MCF 10A (cell line): ENCODE measurements at regions of chr1 and their contacts with region 1.

Region 1: DNA sequence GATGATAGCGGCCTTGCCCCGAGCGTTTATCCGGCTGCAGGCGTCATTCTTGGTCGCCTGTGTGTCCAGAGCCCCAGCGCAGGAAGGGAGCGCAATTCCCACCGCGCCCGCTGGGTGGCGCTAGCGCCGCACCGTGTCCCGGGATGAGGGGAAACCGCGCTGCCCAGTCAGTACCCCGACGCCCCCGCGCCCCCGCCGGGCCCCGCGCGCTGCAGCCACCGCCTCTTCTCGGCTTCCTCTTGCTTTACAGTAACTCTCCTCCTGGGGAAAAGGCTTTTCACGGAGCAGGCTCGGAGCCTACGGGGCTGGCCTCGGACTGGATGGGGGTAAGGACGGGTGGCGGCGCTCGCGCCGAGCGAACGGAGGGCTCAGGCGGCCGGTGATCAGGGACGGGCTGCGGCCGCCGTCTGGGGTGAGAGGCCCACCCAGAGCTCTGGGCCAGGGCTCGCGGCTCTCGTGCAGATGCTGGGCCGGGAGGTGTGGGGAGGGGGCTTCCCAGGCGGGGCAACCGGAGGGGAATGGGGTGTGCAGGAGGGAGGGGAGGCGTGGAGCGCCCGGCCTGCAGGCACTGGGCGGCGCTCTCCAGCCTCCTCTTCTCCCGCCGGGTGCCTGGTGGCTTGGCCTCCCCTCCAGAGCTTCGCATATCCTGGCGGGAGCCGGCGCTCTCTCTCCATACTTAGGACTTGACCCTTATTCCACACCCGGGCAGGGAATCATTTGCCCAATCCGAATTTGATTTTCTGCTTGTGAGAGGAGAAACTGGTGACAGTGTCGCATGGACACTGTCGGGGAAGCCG is 29.8 kb downstream of the TEX35 start:
- DNase-seq: peak; percentile 89
- H3K4me3 Mint-ChIP-seq: peak overlapping the region; percentile 95
- H3K27ac Mint-ChIP-seq: peak overlapping the region; percentile 80
- H3K4me1 Mint-ChIP-seq: peaks cover 35% of the 10 kb centered on the region
- H3K27me3 Mint-ChIP-seq: no peaks in the 10 kb centered on the region
- CTCF ChIP-seq: peak; percentile 100

Region 2: DNA sequence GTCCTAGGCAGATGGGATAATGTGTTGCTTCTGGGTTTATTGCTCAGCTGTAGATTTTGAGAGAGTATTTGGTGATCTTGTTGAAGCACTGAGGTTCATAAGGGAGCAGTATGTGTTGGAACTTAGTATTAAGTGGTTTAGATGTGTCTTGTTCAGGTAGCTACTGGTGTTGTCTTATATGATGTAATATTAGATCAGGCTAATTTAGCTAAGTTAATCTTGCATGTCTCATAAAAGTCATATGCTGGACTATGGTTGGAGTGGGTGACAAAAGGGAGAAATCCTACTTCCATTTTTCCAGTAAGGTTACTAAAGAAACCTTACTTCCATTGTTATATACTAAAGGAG is 242.4 kb before region 1 on chr1:
- CTCF ChIA-PET with region 1: interaction called, 35 read pairs
- POLR2A ChIA-PET with region 1: interaction called, 7 read pairs
- intact Hi-C with region 1: no loop called
- DNase-seq: no peak
- H3K4me3 Mint-ChIP-seq: no peak overlapping the region
- H3K27ac Mint-ChIP-seq: peak overlapping the region; percentile 50
- H3K4me1 Mint-ChIP-seq: peaks cover 15% of the 10 kb centered on the region
- H3K27me3 Mint-ChIP-seq: no peaks in the 10 kb centered on the region
- CTCF ChIP-seq: no peak

Region 3: GRCh38 chr1:178465011-178465410 is 77.7 kb before region 1 on chr1:
- CTCF ChIA-PET with region 1: no interaction called
- POLR2A ChIA-PET with region 1: no interaction called
- intact Hi-C with region 1: no loop called
- DNase-seq: peak; percentile 74
- H3K4me3 Mint-ChIP-seq: peak overlapping the region; percentile 2
- H3K27ac Mint-ChIP-seq: peak overlapping the region; percentile 73
- H3K4me1 Mint-ChIP-seq: peaks cover 27% of the 10 kb centered on the region
- H3K27me3 Mint-ChIP-seq: no peaks in the 10 kb centered on the region
- CTCF ChIP-seq: no peak

Region 4: DNA sequence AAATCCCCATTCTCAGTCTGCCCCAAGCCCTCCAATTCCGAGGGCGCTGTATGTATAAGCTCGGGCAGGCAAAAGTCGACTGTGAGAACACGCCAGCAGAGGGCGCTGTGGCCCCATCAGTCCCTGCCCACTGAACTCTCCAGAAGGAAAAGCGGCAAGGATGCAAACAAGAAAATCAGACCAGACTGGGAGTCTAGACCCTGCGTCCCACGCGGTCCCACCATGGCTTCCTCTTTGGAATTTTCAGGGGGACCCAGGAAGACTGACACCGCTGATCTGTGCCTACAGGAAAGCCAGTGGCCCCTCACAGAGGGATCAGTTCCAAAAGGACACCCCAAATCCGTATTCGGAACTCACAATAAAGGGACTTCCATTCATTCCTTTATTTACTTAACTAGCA is 10.4 kb before region 1 on chr1:
- CTCF ChIA-PET with region 1: interaction called, 93 read pairs
- POLR2A ChIA-PET with region 1: interaction called, 3 read pairs
- intact Hi-C with region 1: no loop called
- DNase-seq: peak; percentile 88
- H3K4me3 Mint-ChIP-seq: no peak overlapping the region
- H3K27ac Mint-ChIP-seq: no peak overlapping the region
- H3K4me1 Mint-ChIP-seq: peaks cover 36% of the 10 kb centered on the region
- H3K27me3 Mint-ChIP-seq: peaks cover 7% of the 10 kb centered on the region
- CTCF ChIP-seq: peak; percentile 99

Region 5: GRCh38 chr1:178566187-178566586 is 23.4 kb after region 1 on chr1:
- CTCF ChIA-PET with region 1: interaction called, 19 read pairs
- POLR2A ChIA-PET with region 1: no interaction called
- intact Hi-C with region 1: no loop called
- DNase-seq: peak; percentile 21
- H3K4me3 Mint-ChIP-seq: no peak overlapping the region
- H3K27ac Mint-ChIP-seq: no peak overlapping the region
- H3K4me1 Mint-ChIP-seq: no peaks in the 10 kb centered on the region
- H3K27me3 Mint-ChIP-seq: no peaks in the 10 kb centered on the region
- CTCF ChIP-seq: no peak

Region 6: GRCh38 chr1:178629252-178630154 is 86.7 kb after region 1 on chr1:
- CTCF ChIA-PET with region 1: interaction called, 15 read pairs
- POLR2A ChIA-PET with region 1: no interaction called
- intact Hi-C with region 1: no loop called
- DNase-seq: no peak
- H3K4me3 Mint-ChIP-seq: no peak overlapping the region
- H3K27ac Mint-ChIP-seq: no peak overlapping the region
- H3K4me1 Mint-ChIP-seq: peaks cover 33% of the 10 kb centered on the region
- H3K27me3 Mint-ChIP-seq: no peaks in the 10 kb centered on the region
- CTCF ChIP-seq: no peak

Region 7: GRCh38 chr1:178739285-178740045 is 196.7 kb after region 1 on chr1:
- CTCF ChIA-PET with region 1: interaction called, 13 read pairs
- POLR2A ChIA-PET with region 1: interaction called, 3 read pairs
- intact Hi-C with region 1: no loop called
- DNase-seq: peak; percentile 67
- H3K4me3 Mint-ChIP-seq: no peak overlapping the region
- H3K27ac Mint-ChIP-seq: peak overlapping the region; percentile 32
- H3K4me1 Mint-ChIP-seq: peaks cover 11% of the 10 kb centered on the region
- H3K27me3 Mint-ChIP-seq: no peaks in the 10 kb centered on the region
- CTCF ChIP-seq: no peak

Region 8: DNA sequence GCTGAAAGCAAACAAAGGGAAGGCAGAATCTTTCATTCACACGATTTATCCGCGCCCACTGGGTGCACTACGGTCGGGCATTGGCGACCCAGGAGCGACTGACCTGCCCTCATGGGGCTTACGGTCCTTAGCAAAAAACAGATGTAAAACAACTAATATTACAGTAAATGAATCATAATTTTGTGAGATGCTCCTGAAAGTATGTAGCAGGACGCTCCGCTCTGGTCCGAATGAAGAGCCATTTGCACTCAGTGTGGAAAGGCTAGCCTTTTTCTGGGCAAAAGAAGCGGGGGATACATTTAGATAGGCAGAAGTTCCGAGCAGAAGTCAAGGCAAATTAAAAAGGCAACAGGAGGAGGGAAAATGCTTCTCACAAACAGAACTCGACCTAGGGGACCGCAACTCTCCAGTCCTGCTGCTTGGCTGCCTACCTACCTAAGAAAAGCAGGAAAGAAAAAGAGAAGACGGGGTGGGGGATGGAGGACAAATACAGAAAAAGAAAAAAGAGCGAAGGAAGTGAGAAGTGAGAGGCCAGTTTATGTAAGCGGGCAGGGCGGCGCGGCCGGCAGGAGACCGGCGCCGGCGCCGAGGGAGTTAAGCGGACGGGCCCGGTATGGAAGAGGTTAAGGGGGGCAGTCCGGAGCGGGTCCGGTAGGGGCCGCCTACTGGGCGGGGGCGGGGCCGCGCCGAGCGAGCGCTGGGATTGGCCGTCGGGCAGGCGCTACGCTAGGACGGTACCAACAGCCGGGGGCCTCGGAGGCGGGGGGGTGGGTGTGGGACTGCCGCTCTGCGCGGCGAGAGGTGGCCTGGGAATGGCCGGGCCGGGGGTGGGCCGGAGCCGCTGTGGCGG is 482.6 kb after region 1 on chr1 and contains the start of gene FAM20B:
- CTCF ChIA-PET with region 1: interaction called, 11 read pairs
- POLR2A ChIA-PET with region 1: interaction called, 6 read pairs
- intact Hi-C with region 1: no loop called
- DNase-seq: peak; percentile 94
- H3K4me3 Mint-ChIP-seq: peak within 1 kb of the TSS; percentile 82
- H3K27ac Mint-ChIP-seq: peak within 1 kb of the TSS; percentile 68
- H3K4me1 Mint-ChIP-seq: peaks cover 31% of the 10 kb centered on the region
- H3K27me3 Mint-ChIP-seq: no peaks in the 10 kb centered on the region
- CTCF ChIP-seq: no peak
- total RNA-seq, gene FAM20B: 44.2 and 45.0 TPM in 2 replicates